ENCODE measurements at regions of chr19 and their contacts with region 1.

Region 1: GRCh38 chr19:45485305-45486077 is 11.4 kb downstream of the RTN2 start:
- DNase-seq: peak; percentile 91 to 98 (median 95)
- ATAC-seq: peak; percentile 99
- H3K4me3 ChIP-seq: peak overlapping the region; percentile 85
- H3K4me3 Mint-ChIP-seq: peak overlapping the region; percentile 83 to 96 (median 90)
- H3K27ac ChIP-seq: peak overlapping the region; percentile 60
- H3K27ac Mint-ChIP-seq: peak overlapping the region in 8 of 9 donors; percentile 34 to 88 (median 82)
- H3K4me1 ChIP-seq: peaks cover 0 to 4% of the 10 kb centered on the region in 2 donors
- H3K4me1 Mint-ChIP-seq: peaks cover 0 to 13% (median 5%) of the 10 kb centered on the region in 7 donors
- H3K27me3 ChIP-seq: no peaks in the 10 kb centered on the region
- H3K27me3 Mint-ChIP-seq: peaks cover 0 to 7% (median 0%) of the 10 kb centered on the region in 5 donors

Region 2: GRCh38 chr19:45370410-45371204 is 114.9 kb before region 1 on chr19 and contains the start of gene ERCC2:
- CTCF ChIA-PET with region 1: no interaction called
- POLR2A ChIA-PET with region 1: no interaction called
- intact Hi-C with region 1: loop called in 1 of 2 experiments (anchors 1 kb)
- DNase-seq: peak; percentile 98 to 100 (median 99)
- ATAC-seq: peak; percentile 99
- H3K4me3 ChIP-seq: peak within 1 kb of the TSS; percentile 72
- H3K4me3 Mint-ChIP-seq: peak within 1 kb of the TSS; percentile 84 to 98 (median 95)
- H3K27ac ChIP-seq: peak within 1 kb of the TSS; percentile 67
- H3K27ac Mint-ChIP-seq: peak within 1 kb of the TSS; percentile 87 to 99 (median 98)
- H3K4me1 ChIP-seq: peaks cover 0 to 6% of the 10 kb centered on the region in 2 donors
- H3K4me1 Mint-ChIP-seq: peaks cover 5 to 21% (median 18%) of the 10 kb centered on the region in 7 donors
- H3K27me3 ChIP-seq: no peaks in the 10 kb centered on the region
- H3K27me3 Mint-ChIP-seq: peaks cover 0 to 2% (median 0%) of the 10 kb centered on the region in 5 donors
- total RNA-seq, gene ERCC2: 14.4 to 25.1 (median 19.2) TPM

Region 3: DNA sequence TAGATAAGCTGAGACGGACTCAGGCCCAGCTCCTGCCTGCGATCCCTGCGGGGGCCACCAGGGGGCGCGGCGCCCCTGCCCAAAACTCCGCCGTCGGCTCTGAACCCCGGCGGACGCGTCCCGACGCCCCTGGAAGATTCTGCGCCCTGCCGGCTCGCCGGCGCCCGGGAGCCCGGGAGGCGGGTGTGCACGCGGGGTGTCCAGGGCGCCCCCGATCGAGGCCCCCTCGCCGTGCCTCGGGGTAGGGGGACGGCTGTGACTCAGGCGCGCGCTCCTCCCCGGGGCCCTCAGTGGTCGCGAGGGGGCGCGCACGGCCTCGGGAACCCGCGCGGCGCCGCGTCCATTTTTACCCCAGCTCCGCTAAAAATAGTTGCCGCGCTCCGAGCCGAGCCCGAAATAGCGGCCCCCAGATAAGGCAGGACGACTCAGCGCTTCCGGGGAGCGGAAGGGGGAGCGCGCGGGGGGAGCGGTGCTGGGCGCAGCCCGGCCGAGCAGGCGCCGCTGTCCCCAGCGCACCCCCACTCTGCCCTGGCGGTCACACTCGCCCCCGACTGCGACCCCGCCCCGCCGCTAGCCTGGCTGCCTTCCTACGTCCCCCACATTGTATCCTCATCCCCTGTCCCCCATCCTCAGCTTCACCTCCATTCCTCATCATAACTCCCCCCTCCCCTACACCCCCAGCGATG is 45.8 kb before region 1 on chr19:
- CTCF ChIA-PET with region 1: interaction called, 217 read pairs
- POLR2A ChIA-PET with region 1: interaction called, 64 read pairs
- intact Hi-C with region 1: loop called in 1 of 2 experiments (anchors 1 kb)
- DNase-seq: peak; percentile 75 to 95 (median 86)
- ATAC-seq: peak; percentile 72
- H3K4me3 ChIP-seq: peak overlapping the region; percentile 57
- H3K4me3 Mint-ChIP-seq: peak overlapping the region; percentile 68 to 83 (median 77)
- H3K27ac ChIP-seq: peak overlapping the region; percentile 69
- H3K27ac Mint-ChIP-seq: peak overlapping the region in 4 of 9 donors; percentile 51 to 91 (median 74)
- H3K4me1 ChIP-seq: peaks cover 24% of the 10 kb centered on the region in 2 donors
- H3K4me1 Mint-ChIP-seq: peaks cover 26 to 35% (median 33%) of the 10 kb centered on the region in 7 donors
- H3K27me3 ChIP-seq: no peaks in the 10 kb centered on the region
- H3K27me3 Mint-ChIP-seq: peaks cover 0 to 5% (median 0%) of the 10 kb centered on the region in 5 donors

Region 4: GRCh38 chr19:45496349-45496953 is 11.0 kb after region 1 on chr19:
- CTCF ChIA-PET with region 1: interaction called, 12 read pairs
- POLR2A ChIA-PET with region 1: interaction called, 5 read pairs
- intact Hi-C with region 1: loop called (anchors 1 kb)
- DNase-seq: peak in 7 of 9 donors; percentile 44 to 75 (median 55)
- ATAC-seq: peak; percentile 33
- H3K4me3 ChIP-seq: peak overlapping the region; percentile 65
- H3K4me3 Mint-ChIP-seq: peak overlapping the region; percentile 72 to 97 (median 77)
- H3K27ac ChIP-seq: no peak overlapping the region
- H3K27ac Mint-ChIP-seq: peak overlapping the region in 4 of 9 donors; percentile 12 to 87 (median 48)
- H3K4me1 ChIP-seq: peaks cover 28 to 38% of the 10 kb centered on the region in 2 donors
- H3K4me1 Mint-ChIP-seq: peaks cover 28 to 52% (median 48%) of the 10 kb centered on the region in 7 donors
- H3K27me3 ChIP-seq: no peaks in the 10 kb centered on the region
- H3K27me3 Mint-ChIP-seq: peaks cover 12 to 37% (median 19%) of the 10 kb centered on the region in 5 donors

Region 5: GRCh38 chr19:45523642-45524256 is 38.3 kb after region 1 on chr19:
- CTCF ChIA-PET with region 1: interaction called, 4 read pairs
- POLR2A ChIA-PET with region 1: no interaction called
- intact Hi-C with region 1: loop called in 1 of 2 experiments (anchors 1 kb)
- DNase-seq: peak; percentile 54 to 85 (median 83)
- ATAC-seq: peak; percentile 100
- H3K4me3 ChIP-seq: no peak overlapping the region
- H3K4me3 Mint-ChIP-seq: no peak overlapping the region
- H3K27ac ChIP-seq: no peak overlapping the region
- H3K27ac Mint-ChIP-seq: peak overlapping the region in 8 of 9 donors; percentile 26 to 88 (median 65)
- H3K4me1 ChIP-seq: no peaks in the 10 kb centered on the region
- H3K4me1 Mint-ChIP-seq: peaks cover 11 to 24% (median 17%) of the 10 kb centered on the region in 7 donors
- H3K27me3 ChIP-seq: no peaks in the 10 kb centered on the region
- H3K27me3 Mint-ChIP-seq: no peaks in the 10 kb centered on the region

Region 6: GRCh38 chr19:45717166-45717982 is 231.9 kb after region 1 on chr19:
- CTCF ChIA-PET with region 1: interaction called, 3 read pairs
- POLR2A ChIA-PET with region 1: no interaction called
- intact Hi-C with region 1: loop called in 1 of 2 experiments (anchors 1 kb)
- DNase-seq: peak; percentile 92 to 99 (median 98)
- ATAC-seq: peak; percentile 98
- H3K4me3 ChIP-seq: peak overlapping the region; percentile 80
- H3K4me3 Mint-ChIP-seq: peak overlapping the region; percentile 89 to 99 (median 95)
- H3K27ac ChIP-seq: peak overlapping the region; percentile 89
- H3K27ac Mint-ChIP-seq: peak overlapping the region; percentile 88 to 97 (median 96)
- H3K4me1 ChIP-seq: peaks cover 17 to 26% of the 10 kb centered on the region in 2 donors
- H3K4me1 Mint-ChIP-seq: peaks cover 26 to 55% (median 38%) of the 10 kb centered on the region in 7 donors
- H3K27me3 ChIP-seq: no peaks in the 10 kb centered on the region
- H3K27me3 Mint-ChIP-seq: no peaks in the 10 kb centered on the region